A673 (cell line): ENCODE measurements at regions of chr3 and their contacts with region 1.

Region 1: DNA sequence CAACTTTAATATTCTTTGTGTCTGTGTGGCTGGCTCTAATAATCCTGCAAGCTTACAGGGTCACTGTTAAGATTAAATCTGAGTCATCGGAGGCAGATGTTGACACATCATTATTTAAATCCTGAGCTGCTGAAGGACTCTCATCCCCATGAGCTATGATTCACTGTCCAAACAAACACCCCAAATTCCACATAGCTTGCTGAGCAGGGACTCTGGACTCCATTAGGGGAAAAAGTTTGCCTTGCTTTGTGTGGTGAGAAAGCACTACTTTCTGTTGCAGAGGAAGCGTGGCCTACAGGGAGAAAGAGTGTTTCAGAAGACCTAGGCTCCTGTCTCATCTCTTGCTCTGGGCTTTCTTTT is 213.7 kb downstream of the PDCD6IP start:
- DNase-seq: peak; percentile 87
- H3K4me3 ChIP-seq: no peak overlapping the region
- H3K27ac ChIP-seq: peak overlapping the region; percentile 85
- H3K4me1 ChIP-seq: peaks cover 76% of the 10 kb centered on the region
- H3K27me3 ChIP-seq: no peaks in the 10 kb centered on the region
- CTCF ChIP-seq: no peak

Region 2: DNA sequence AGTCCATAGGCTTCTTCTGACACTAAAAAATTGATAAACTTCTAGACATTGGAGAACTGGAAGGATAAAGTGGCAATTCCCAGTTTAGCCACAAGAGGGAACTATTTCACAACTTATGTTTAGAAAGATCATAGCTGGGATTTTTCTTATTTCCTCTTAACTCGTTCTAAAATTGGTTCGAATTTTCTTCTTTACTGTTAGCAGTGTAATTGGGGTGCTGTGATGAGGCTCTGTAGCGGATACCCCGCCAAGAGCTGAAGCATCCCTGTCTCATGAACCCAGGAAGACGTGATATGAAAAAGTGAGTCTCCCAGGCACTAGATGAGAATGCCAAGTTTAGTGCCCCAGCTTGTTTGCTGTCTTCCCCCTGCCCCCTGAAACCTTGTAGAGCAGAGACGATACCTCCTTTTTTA is 128.5 kb before region 1 on chr3:
- CTCF ChIA-PET with region 1: interaction called, 4 read pairs
- POLR2A ChIA-PET with region 1: no interaction called
- intact Hi-C with region 1: loop called (anchors 2 kb)
- DNase-seq: peak; percentile 85
- H3K4me3 ChIP-seq: peak overlapping the region; percentile 15
- H3K27ac ChIP-seq: peak overlapping the region; percentile 81
- H3K4me1 ChIP-seq: peaks cover 29% of the 10 kb centered on the region
- H3K27me3 ChIP-seq: no peaks in the 10 kb centered on the region
- CTCF ChIP-seq: peak; percentile 87

Region 3: GRCh38 chr3:33954956-33955355 is 57.1 kb before region 1 on chr3:
- CTCF ChIA-PET with region 1: no interaction called
- POLR2A ChIA-PET with region 1: no interaction called
- intact Hi-C with region 1: loop called (anchors 5 kb)
- DNase-seq: peak; percentile 80
- H3K4me3 ChIP-seq: no peak overlapping the region
- H3K27ac ChIP-seq: peak overlapping the region; percentile 98
- H3K4me1 ChIP-seq: peaks cover 55% of the 10 kb centered on the region
- H3K27me3 ChIP-seq: no peaks in the 10 kb centered on the region
- CTCF ChIP-seq: peak; percentile 66

Region 4: DNA sequence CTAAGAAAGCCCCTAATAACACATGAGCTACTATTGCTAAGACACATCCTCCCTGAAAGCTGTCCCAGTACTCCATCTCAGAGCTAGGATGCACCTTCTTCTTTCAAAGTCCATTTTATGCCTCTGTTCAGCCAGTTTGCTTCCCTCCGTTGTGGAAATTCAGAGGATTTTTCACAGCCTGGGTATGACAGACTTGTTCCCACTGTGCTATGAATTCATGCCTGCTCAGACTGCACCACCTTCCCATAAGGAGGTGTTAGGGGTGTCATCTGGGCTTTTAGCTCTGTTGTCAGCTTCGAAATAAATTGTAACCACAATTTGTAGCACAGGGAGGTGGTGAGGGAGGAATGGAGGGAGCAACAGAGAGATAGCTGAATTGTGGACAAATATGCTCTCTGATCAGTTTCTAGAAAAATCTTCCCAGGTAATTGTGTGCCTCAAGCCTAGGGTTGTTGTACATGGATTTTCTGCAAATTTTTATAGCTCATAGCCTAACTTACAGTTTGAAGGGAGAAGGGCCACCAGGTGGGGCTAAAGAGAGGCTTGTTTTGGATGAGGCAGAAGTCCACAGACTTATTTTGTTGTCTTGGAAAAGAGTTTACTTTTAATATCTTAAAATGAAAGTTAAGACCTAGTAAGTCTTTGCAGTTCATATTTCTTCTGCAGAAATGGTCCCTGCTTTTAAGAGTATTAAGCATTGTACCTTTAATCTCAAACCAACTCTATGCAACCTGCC is 248.4 kb after region 1 on chr3:
- CTCF ChIA-PET with region 1: interaction called, 3 read pairs
- POLR2A ChIA-PET with region 1: no interaction called
- intact Hi-C with region 1: loop called (anchors 5 kb)
- DNase-seq: peak; percentile 89
- H3K4me3 ChIP-seq: no peak overlapping the region
- H3K27ac ChIP-seq: peak overlapping the region; percentile 97
- H3K4me1 ChIP-seq: peaks cover 99% of the 10 kb centered on the region
- H3K27me3 ChIP-seq: no peaks in the 10 kb centered on the region
- CTCF ChIP-seq: peak; percentile 83

Region 5: GRCh38 chr3:35137612-35138011 is 1125.5 kb after region 1 on chr3:
- CTCF ChIA-PET with region 1: no interaction called
- POLR2A ChIA-PET with region 1: no interaction called
- intact Hi-C with region 1: no loop called
- DNase-seq: no peak
- H3K4me3 ChIP-seq: no peak overlapping the region
- H3K27ac ChIP-seq: no peak overlapping the region
- H3K4me1 ChIP-seq: no peaks in the 10 kb centered on the region
- H3K27me3 ChIP-seq: no peaks in the 10 kb centered on the region
- CTCF ChIP-seq: no peak